ENCODE measurements at regions of chr21 and their contacts with region 1.

Region 1: GRCh38 chr21:33025489-33026442 is at the start of gene OLIG2:
- DNase-seq: peak; percentile 62
- H3K4me3 Mint-ChIP-seq: peak within 1 kb of the TSS; percentile 28
- H3K27ac Mint-ChIP-seq: peak within 1 kb of the TSS; percentile 71
- H3K4me1 Mint-ChIP-seq: peaks cover 19% of the 10 kb centered on the region
- H3K27me3 Mint-ChIP-seq: peaks cover 79% of the 10 kb centered on the region
- total RNA-seq, gene OLIG2: not detected in 2 replicates

Region 2: GRCh38 chr21:33011462-33011861 is 14.3 kb before region 1 on chr21:
- intact Hi-C with region 1: no loop called
- DNase-seq: no peak
- H3K4me3 Mint-ChIP-seq: no peak overlapping the region
- H3K27ac Mint-ChIP-seq: no peak overlapping the region
- H3K4me1 Mint-ChIP-seq: no peaks in the 10 kb centered on the region
- H3K27me3 Mint-ChIP-seq: peaks cover 25% of the 10 kb centered on the region

Region 3: DNA sequence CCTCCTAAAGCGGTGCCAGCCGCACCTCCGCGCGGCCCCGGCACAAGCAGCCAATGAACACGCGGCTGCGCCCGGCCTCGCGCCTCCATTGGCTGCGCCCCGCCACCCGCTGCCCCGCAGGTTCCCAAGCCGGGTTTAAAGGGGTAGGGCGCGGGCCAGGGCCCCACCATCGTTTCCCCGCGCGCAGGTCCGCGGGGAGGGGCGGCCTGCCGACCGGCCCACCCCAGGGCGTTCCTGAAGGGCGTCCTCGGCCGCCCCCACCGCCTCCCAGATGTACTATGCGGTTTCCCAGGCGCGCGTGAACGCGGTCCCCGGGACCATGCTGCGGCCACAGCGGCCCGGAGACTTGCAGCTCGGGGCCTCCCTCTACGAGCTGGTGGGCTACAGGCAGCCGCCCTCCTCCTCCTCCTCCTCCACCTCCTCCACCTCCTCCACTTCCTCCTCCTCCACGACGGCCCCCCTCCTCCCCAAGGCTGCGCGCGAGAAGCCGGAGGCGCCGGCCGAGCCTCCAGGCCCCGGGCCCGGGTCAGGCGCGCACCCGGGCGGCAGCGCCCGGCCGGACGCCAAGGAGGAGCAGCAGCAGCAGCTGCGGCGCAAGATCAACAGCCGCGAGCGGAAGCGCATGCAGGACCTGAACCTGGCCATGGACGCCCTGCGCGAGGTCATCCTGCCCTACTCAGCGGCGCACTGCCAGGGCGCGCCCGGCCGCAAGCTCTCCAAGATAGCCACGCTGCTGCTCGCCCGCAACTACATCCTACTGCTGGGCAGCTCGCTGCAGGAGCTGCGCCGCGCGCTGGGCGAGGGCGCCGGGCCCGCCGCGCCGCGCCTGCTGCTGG is 44.4 kb after region 1 on chr21 and contains the start of gene OLIG1:
- intact Hi-C with region 1: loop called (anchors 2 kb)
- DNase-seq: peak; percentile 73
- H3K4me3 Mint-ChIP-seq: peak within 1 kb of the TSS; percentile 76
- H3K27ac Mint-ChIP-seq: no peak within 1 kb of the TSS
- H3K4me1 Mint-ChIP-seq: peaks cover 9% of the 10 kb centered on the region
- H3K27me3 Mint-ChIP-seq: peaks cover 82% of the 10 kb centered on the region
- total RNA-seq, gene OLIG1: not detected in 2 replicates